ENCODE measurements at regions of chr6 and their contacts with region 1.

Region 1: GRCh38 chr6:25223490-25223991 is 55.6 kb upstream of the CARMIL1 start:
- DNase-seq: peak in 1 of 2 experiments; percentile 73
- H3K4me3 ChIP-seq: no peak overlapping the region
- H3K27ac ChIP-seq: no peak overlapping the region
- H3K4me1 ChIP-seq: no peaks in the 10 kb centered on the region
- H3K27me3 ChIP-seq: no peaks in the 10 kb centered on the region
- CTCF ChIP-seq: peak in 2 of 3 experiments; percentile 64 to 80; a peak in 3 of 4 replicates
- EP300 ChIP-seq: no peak
- POLR2A ChIP-seq: no peak
- RAD21 ChIP-seq: peak; percentile 95 to 96

Region 2: DNA sequence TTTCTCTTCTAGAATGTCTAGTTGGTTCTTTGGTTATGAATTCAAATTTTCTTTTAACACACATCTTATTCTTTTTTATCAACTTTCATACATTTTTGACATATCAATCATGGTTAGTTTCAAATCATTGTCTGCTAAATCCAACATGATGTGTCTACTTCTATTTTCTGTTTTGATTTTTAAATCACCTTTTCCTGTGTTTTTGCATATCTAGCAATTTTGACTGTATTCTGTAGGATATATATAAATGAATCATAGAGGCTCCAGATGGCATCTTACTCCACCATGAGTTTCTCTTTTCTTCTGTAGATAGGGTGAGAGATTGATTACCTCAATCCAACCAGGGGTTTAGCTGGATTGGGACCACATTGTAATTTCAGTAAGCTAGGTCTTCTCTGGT is 21.3 kb after region 1 on chr6:
- CTCF ChIA-PET with region 1: interaction called, 12 read pairs
- POLR2A ChIA-PET with region 1: no interaction called
- DNase-seq: no peak
- H3K4me3 ChIP-seq: no peak overlapping the region
- H3K27ac ChIP-seq: no peak overlapping the region
- H3K4me1 ChIP-seq: peaks cover 0 to 2% (median 0%) of the 10 kb centered on the region in 4 experiments; a peak in 1 of 7 replicates
- H3K27me3 ChIP-seq: no peaks in the 10 kb centered on the region
- CTCF ChIP-seq: no peak
- EP300 ChIP-seq: no peak
- POLR2A ChIP-seq: no peak
- RAD21 ChIP-seq: no peak

Region 3: GRCh38 chr6:25302677-25303128 is 79.2 kb after region 1 on chr6:
- CTCF ChIA-PET with region 1: no interaction called
- POLR2A ChIA-PET with region 1: no interaction called
- DNase-seq: no peak
- H3K4me3 ChIP-seq: no peak overlapping the region
- H3K27ac ChIP-seq: no peak overlapping the region
- H3K4me1 ChIP-seq: peaks cover 0 to 7% (median 4%) of the 10 kb centered on the region in 4 experiments; a peak in 3 of 7 replicates
- H3K27me3 ChIP-seq: no peaks in the 10 kb centered on the region
- CTCF ChIP-seq: no peak
- EP300 ChIP-seq: no peak
- POLR2A ChIP-seq: no peak
- RAD21 ChIP-seq: no peak

Region 4: GRCh38 chr6:25392372-25392771 is 168.8 kb after region 1 on chr6:
- CTCF ChIA-PET with region 1: no interaction called
- POLR2A ChIA-PET with region 1: no interaction called
- DNase-seq: no peak
- H3K4me3 ChIP-seq: no peak overlapping the region
- H3K27ac ChIP-seq: no peak overlapping the region
- H3K4me1 ChIP-seq: peaks cover 0 to 15% (median 3%) of the 10 kb centered on the region in 4 experiments; a peak in 5 of 7 replicates
- H3K27me3 ChIP-seq: no peaks in the 10 kb centered on the region
- CTCF ChIP-seq: no peak
- EP300 ChIP-seq: no peak
- POLR2A ChIP-seq: no peak
- RAD21 ChIP-seq: no peak

Region 5: DNA sequence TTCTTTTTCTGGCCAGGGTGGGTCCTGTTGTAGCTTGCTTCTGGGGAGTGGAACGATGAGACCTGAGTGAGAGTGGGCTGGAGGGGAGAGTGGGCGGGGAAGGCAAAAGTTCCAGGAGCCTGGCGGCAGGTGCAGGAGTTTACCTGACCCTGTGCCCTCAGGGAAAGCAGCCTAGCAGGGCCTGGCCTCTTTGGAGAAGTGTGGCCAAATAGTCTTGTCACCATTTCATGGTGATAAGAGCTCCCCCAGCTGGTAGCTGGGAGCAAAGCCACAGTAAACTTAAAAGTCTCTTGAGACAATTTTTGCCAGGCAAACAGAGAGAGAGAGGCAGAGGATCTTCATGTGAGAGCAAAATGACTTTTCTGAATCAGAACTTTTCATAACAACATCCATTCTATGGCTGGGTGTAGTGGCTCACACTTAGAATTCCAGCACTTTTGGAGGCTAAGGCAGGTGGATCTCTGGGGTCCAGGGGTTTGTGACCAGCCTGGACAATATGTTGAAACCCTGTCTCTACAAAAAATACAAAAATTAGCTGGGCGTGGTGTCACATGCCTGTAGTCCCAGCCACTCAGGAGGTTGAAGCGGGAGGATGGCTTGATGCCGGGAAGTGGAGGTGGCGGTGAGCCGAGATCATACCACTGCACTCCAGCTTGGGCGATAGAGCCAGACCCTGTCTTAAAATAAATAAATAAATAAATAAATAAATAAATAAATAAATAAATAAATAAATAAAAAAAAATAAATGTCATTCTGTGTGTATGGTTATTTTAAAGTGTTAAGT is 266.7 kb after region 1 on chr6:
- CTCF ChIA-PET with region 1: interaction called, 15 read pairs
- POLR2A ChIA-PET with region 1: no interaction called
- DNase-seq: peak; percentile 66 to 79
- H3K4me3 ChIP-seq: no peak overlapping the region
- H3K27ac ChIP-seq: no peak overlapping the region
- H3K4me1 ChIP-seq: no peaks in the 10 kb centered on the region
- H3K27me3 ChIP-seq: no peaks in the 10 kb centered on the region
- CTCF ChIP-seq: peak; percentile 34 to 92 (median 90)
- EP300 ChIP-seq: no peak
- POLR2A ChIP-seq: no peak
- RAD21 ChIP-seq: peak; percentile 93 to 95

Region 6: DNA sequence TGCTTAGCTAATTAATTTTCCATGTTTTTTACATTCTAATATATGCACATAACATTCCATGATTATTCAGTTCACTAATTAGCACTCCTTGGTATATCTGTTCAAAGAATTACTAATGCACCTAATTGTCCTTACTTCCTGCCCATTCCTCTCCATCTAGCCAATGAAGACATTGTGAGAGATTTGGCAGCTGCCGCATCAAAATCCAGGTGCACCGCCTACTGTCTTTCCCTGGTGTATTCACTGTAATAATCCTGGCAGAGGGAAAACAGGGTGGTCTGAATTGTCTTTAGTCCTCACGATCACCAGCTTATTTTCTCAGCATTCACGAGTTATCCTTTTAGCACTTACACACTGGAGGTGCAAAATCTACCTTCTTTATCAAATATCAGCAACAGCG is 367.4 kb after region 1 on chr6:
- CTCF ChIA-PET with region 1: interaction called, 11 read pairs
- POLR2A ChIA-PET with region 1: no interaction called
- DNase-seq: no peak
- H3K4me3 ChIP-seq: no peak overlapping the region
- H3K27ac ChIP-seq: no peak overlapping the region
- H3K4me1 ChIP-seq: no peaks in the 10 kb centered on the region
- H3K27me3 ChIP-seq: no peaks in the 10 kb centered on the region
- CTCF ChIP-seq: no peak
- EP300 ChIP-seq: no peak
- POLR2A ChIP-seq: no peak
- RAD21 ChIP-seq: no peak; a peak in 1 of 4 replicates

Measured in H1 (cell line).